RWPE1 (cell line): ENCODE measurements at regions of chr5 and their contacts with region 1.

Region 1: GRCh38 chr5:157431544-157432200 is 28.3 kb upstream of the NIPAL4 start:
- DNase-seq: peak; percentile 54
- H3K27ac ChIP-seq: no peak overlapping the region
- CTCF ChIP-seq: peak; percentile 71

Region 2: GRCh38 chr5:157020490-157021222 is 411.0 kb before region 1 on chr5:
- CTCF ChIA-PET with region 1: no interaction called
- POLR2A ChIA-PET with region 1: no interaction called
- DNase-seq: no peak
- H3K27ac ChIP-seq: no peak overlapping the region
- CTCF ChIP-seq: no peak

Region 3: DNA sequence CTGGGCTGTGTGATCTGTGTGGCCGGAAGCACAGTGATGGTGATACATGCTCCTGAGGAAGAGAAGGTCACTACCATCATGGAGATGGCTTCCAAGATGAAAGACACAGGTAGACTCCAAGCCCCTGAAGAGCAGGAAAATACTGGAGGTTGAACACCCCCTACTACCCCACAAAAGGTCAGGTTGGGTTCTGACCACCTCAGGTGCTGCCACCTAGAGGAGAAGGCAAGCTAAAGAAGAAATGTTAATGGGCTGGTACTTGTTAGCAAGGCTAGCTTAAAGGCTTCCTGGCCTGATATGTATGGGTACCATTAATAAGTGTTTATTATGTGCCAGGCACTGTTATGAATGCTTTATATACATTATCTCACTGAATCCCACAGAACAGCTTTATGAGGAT is 40.0 kb after region 1 on chr5:
- CTCF ChIA-PET with region 1: interaction called, 22 read pairs
- POLR2A ChIA-PET with region 1: no interaction called
- DNase-seq: peak; percentile 48
- H3K27ac ChIP-seq: no peak overlapping the region
- CTCF ChIP-seq: peak; percentile 76